ENCODE measurements at regions of chr12 and their contacts with region 1.

Region 1: DNA sequence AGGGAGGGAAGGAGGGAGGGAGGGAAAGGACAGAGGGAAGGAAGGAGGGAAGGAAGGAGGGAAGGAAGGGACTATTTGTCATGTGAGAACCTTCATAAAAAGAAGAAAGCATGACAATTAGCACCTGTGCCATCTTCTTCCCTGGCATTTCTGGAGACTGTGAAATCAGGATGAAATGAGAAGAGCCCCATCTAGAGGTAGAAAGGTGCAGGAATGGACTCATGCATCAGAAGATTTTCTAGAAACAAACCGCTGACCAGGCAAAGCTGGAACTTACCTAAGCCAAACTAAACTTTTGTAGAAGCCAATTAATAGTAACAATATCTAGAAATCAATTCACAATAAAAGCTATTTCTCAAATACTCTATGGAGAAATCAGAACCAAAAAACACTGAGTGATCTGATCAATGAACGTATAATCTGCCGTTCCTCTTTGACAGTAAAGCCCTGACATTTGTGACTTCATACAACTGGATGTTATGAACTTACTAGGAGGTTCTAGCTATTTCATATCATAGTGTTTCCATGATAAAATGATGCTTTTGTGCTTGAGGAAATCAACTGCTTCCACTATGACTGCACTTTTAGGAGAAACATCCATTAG is 24.4 kb upstream of the CRACR2A start:
- DNase-seq: no peak

Region 2: GRCh38 chr12:3299929-3300832 is 477.1 kb before region 1 on chr12:
- intact Hi-C with region 1: loop called (anchors 2 kb)
- DNase-seq: peak; percentile 93

Region 3: GRCh38 chr12:3342056-3342455 is 435.3 kb before region 1 on chr12:
- intact Hi-C with region 1: loop called (anchors 10 kb)
- DNase-seq: no peak

Region 4: DNA sequence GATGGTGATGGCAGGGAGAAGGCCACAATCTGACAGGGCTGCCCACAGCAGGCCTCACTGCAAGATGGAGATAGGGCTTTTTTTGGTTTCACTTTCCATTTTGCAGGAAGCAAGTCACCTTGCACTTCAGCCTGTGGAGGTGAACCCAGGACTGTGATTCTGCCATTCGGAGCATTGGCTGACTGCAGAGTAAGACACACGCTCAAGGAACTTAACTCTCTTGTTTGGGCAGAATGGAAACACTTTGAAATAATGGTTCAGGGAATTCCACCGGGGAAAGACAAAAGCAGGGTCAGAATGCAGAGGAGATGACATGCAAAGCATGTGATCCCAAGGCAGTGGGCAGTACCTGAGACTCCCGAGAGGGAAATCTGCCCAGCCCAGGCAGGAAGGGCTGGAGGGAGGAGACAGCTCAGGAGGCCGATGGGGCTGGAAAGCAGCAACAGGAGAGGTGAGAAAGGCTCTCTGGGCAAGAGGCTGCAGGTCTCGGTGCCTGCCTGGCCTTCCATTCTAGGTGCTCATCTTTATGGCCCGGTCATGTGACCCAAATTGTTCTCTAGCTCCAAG is 345.0 kb before region 1 on chr12:
- intact Hi-C with region 1: no loop called
- DNase-seq: no peak

Region 5: GRCh38 chr12:3658327-3659163 is 118.8 kb before region 1 on chr12:
- intact Hi-C with region 1: loop called (anchors 10 kb)
- DNase-seq: no peak

Region 6: GRCh38 chr12:3827301-3828000 is 50.1 kb after region 1 on chr12:
- intact Hi-C with region 1: no loop called
- DNase-seq: no peak

Measured in cardiac septum (tissue), 1 donor.